ENCODE measurements at regions of chr6 and their contacts with region 1.

Region 1: DNA sequence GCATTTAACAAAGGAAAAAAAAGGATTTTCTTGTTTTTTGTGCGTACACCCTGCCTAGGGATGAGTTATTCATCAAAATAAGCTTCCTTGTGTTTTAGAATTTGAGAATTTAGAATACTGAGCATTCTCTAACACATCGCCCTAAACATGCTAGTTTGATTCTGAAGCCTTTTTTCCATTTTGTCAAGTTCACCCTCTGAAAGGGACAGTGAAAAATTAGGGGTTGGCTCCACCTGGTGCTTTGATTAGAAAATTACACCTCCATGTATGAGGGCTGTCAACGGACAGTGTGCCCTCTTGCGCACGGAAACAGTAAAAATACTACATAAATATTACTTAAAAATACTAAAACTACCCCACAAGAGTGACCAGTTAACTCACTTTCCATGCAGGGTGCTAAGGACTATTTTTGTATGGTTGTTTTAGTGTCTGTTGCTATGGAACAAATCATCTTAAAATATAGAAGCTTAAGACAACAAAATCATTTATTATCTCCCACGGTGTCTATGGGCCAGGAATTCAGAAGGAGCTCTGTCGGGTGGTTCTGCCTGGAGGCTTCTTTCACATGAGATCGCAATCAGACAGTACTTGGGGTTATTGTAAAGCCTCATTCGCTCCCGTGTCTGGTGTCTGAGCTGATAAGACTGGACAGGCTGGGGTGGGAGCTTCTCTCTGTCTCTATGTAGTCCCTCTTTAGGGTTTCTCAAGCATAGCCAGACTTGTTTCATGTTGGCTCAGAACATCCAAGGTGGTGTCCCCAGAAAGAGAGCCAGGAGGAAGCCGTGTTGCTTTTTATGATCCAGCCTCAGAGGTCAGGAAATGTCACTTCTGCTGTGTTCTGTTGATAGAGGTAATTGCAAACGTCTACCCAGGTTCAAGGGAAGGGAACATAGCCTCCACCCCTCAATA is 41.1 kb upstream of the TMEM170B start:
- DNase-seq: peak; percentile 48 to 87 (median 69)
- ATAC-seq: peak; percentile 99
- H3K4me3 ChIP-seq: no peak overlapping the region
- H3K4me3 Mint-ChIP-seq: no peak overlapping the region
- H3K27ac ChIP-seq: no peak overlapping the region
- H3K27ac Mint-ChIP-seq: no peak overlapping the region
- H3K4me1 ChIP-seq: no peaks in the 10 kb centered on the region
- H3K4me1 Mint-ChIP-seq: peaks cover 3% of the 10 kb centered on the region
- H3K27me3 ChIP-seq: no peaks in the 10 kb centered on the region
- H3K27me3 Mint-ChIP-seq: no peaks in the 10 kb centered on the region
- CTCF ChIP-seq: peak; percentile 98

Region 2: GRCh38 chr6:10621213-10621612 is 875.2 kb before region 1 on chr6:
- CTCF ChIA-PET with region 1: no interaction called
- POLR2A ChIA-PET with region 1: no interaction called
- intact Hi-C with region 1: no loop called
- DNase-seq: no peak
- ATAC-seq: no peak
- H3K4me3 ChIP-seq: no peak overlapping the region
- H3K4me3 Mint-ChIP-seq: no peak overlapping the region
- H3K27ac ChIP-seq: no peak overlapping the region
- H3K27ac Mint-ChIP-seq: no peak overlapping the region
- H3K4me1 ChIP-seq: no peaks in the 10 kb centered on the region
- H3K4me1 Mint-ChIP-seq: no peaks in the 10 kb centered on the region
- H3K27me3 ChIP-seq: no peaks in the 10 kb centered on the region
- H3K27me3 Mint-ChIP-seq: no peaks in the 10 kb centered on the region
- CTCF ChIP-seq: no peak

Region 3: DNA sequence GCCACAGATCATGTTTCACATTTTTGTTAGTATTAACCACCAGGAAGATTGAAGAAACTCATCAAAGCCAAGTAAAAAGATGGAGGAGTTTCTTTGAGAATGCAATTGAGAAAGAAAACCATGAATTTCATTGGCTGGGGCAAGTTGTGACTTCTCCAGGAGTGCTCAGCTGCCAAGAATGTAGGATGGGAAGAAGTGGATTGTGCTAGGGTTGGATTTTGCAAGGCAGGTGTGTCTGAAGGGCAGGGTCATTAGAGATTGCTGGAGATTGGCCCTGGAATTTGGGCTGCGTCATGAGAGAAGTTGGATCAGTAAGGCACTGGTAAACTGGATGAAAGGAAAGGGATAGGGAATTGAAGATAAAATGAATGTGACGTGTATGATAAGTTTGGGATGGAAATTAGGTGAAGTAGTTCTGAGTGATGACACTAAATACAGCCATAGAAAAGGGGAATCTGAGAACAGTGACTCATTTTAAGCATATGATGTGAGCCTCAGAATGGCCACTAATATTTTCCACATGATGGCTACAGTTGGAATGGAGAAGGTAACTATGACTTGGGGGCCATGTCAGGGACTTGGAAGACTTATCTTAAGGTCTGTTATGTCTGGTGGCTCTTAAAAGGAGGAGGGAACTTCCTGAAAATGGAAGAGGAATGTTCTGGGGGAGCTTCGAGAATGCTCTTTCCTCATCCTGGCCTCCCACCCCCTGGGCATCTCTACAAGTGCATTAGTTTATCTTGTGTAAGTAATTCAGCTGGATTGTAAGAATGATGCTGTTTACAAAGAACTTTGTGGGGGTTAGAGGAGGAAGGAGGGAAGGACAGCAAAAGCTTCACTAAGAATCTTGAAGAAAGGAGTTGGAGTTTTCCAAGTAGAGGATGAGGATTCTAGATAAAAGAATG is 357.1 kb before region 1 on chr6:
- CTCF ChIA-PET with region 1: interaction called, 101 read pairs
- POLR2A ChIA-PET with region 1: interaction called, 3 read pairs
- intact Hi-C with region 1: loop called (anchors 1 kb)
- DNase-seq: no peak
- ATAC-seq: no peak
- H3K4me3 ChIP-seq: no peak overlapping the region
- H3K4me3 Mint-ChIP-seq: no peak overlapping the region
- H3K27ac ChIP-seq: no peak overlapping the region
- H3K27ac Mint-ChIP-seq: no peak overlapping the region
- H3K4me1 ChIP-seq: no peaks in the 10 kb centered on the region
- H3K4me1 Mint-ChIP-seq: no peaks in the 10 kb centered on the region
- H3K27me3 ChIP-seq: no peaks in the 10 kb centered on the region
- H3K27me3 Mint-ChIP-seq: no peaks in the 10 kb centered on the region
- CTCF ChIP-seq: no peak

Region 4: DNA sequence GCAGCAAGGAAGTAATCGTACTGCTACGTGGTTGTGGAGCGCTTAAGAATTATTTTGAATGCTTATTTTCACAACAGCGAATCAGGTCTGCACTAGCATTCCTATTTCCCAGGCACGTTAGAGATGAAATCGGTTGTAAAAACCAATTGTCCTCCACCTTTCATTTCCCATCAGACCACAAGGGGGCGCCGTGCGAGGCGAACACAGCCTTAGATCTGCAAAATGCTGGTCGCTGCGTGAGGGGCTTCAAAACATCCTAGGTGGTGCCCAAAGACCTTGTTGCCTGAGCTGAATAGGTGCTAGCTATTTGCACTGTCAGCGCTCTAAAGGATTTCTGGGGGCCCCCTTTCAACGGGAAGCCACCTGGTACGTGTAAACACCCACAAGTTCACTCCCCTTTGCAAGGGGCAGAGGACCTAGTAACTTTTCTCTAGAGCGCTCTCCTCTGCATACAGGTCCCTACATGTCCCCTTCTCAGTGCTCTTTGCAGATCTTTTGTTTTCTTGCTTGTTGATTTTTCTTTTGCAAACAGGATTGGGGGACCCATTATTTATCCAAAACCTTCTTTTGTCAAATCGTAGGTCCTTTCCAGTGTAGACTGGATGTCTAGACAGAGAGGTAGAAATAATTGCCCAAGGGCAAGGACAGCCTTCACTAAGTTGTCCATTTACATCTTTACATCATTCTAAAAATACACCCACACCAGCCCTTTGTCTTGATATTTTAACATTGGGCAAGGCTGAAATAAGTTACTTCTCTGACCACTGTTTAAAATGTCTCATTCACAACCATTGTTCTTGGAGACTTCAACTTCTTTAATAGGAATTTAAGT is 323.7 kb before region 1 on chr6:
- CTCF ChIA-PET with region 1: interaction called, 257 read pairs
- POLR2A ChIA-PET with region 1: interaction called, 3 read pairs
- intact Hi-C with region 1: loop called (anchors 1 kb)
- DNase-seq: peak; percentile 58 to 90 (median 77)
- ATAC-seq: peak; percentile 79
- H3K4me3 ChIP-seq: peak overlapping the region in 1 of 2 experiments; percentile 23
- H3K4me3 Mint-ChIP-seq: peak overlapping the region; percentile 44
- H3K27ac ChIP-seq: no peak overlapping the region
- H3K27ac Mint-ChIP-seq: peak overlapping the region; percentile 62
- H3K4me1 ChIP-seq: peaks cover 9% of the 10 kb centered on the region
- H3K4me1 Mint-ChIP-seq: peaks cover 11% of the 10 kb centered on the region
- H3K27me3 ChIP-seq: no peaks in the 10 kb centered on the region
- H3K27me3 Mint-ChIP-seq: no peaks in the 10 kb centered on the region
- CTCF ChIP-seq: peak; percentile 86

Region 5: DNA sequence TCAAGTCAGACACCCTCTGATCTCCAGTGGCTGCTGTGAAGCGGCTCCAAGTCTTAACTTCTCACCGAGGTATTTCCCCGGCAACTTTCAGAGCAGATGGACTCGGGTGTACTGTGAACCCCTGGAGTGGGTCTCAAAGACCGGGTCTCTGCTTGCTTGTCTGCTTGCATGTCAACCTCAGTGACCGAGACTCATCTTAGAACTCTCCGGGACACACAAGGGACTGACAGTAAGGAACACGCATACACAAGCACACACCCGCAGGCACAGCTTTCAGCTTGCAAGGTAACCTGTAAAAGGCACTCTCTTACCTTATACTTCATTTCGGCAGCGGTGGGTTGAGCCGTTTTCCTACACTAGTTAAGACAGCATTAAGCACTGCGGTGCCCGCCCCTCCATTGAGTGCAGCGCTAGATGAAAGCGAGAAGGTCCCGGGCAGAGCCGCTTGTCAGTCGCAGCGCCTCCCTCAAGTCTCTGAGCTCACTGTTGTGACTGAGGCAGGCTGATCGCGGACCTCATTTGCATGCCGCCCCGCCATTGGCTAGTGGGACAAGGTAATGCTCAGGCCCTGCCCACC is 264.1 kb before region 1 on chr6 and contains the start of gene NEDD9:
- CTCF ChIA-PET with region 1: interaction called, 15 read pairs
- POLR2A ChIA-PET with region 1: no interaction called
- intact Hi-C with region 1: no loop called
- DNase-seq: peak; percentile 87 to 97 (median 91)
- ATAC-seq: peak; percentile 94
- H3K4me3 ChIP-seq: peak within 1 kb of the TSS; percentile 62 to 70
- H3K4me3 Mint-ChIP-seq: peak within 1 kb of the TSS; percentile 94
- H3K27ac ChIP-seq: peak within 1 kb of the TSS; percentile 76 to 96
- H3K27ac Mint-ChIP-seq: peak within 1 kb of the TSS; percentile 99
- H3K4me1 ChIP-seq: peaks cover 25% of the 10 kb centered on the region
- H3K4me1 Mint-ChIP-seq: peaks cover 61% of the 10 kb centered on the region
- H3K27me3 ChIP-seq: no peaks in the 10 kb centered on the region
- H3K27me3 Mint-ChIP-seq: no peaks in the 10 kb centered on the region
- CTCF ChIP-seq: no peak
- total RNA-seq, gene NEDD9: 41.2 to 44.2 TPM

Region 6: GRCh38 chr6:11270030-11271027 is 226.1 kb before region 1 on chr6:
- CTCF ChIA-PET with region 1: no interaction called
- POLR2A ChIA-PET with region 1: no interaction called
- intact Hi-C with region 1: no loop called
- DNase-seq: no peak
- ATAC-seq: no peak
- H3K4me3 ChIP-seq: no peak overlapping the region
- H3K4me3 Mint-ChIP-seq: no peak overlapping the region
- H3K27ac ChIP-seq: no peak overlapping the region
- H3K27ac Mint-ChIP-seq: no peak overlapping the region
- H3K4me1 ChIP-seq: peaks cover 5% of the 10 kb centered on the region
- H3K4me1 Mint-ChIP-seq: peaks cover 6% of the 10 kb centered on the region
- H3K27me3 ChIP-seq: no peaks in the 10 kb centered on the region
- H3K27me3 Mint-ChIP-seq: no peaks in the 10 kb centered on the region
- CTCF ChIP-seq: no peak

Region 7: DNA sequence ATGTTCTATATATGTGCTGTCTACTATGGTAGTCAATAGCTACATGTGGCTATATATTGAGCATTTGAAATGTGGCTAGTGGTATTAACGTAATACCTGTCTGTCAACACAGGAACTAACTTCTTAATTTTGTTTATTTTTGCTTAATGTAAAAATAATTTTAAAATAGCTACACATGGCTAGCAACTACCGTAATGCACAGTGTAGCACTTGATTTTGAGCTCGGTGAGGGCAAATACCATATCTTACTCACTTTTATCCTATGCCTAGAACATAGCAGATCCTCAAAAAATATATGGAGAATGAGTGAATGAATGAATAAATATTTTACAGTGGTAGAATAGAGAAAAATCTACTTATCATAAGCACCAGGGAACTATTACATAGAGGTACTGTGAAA is 13.1 kb after region 1 on chr6:
- CTCF ChIA-PET with region 1: interaction called, 10 read pairs
- POLR2A ChIA-PET with region 1: no interaction called
- intact Hi-C with region 1: no loop called
- DNase-seq: no peak
- ATAC-seq: no peak
- H3K4me3 ChIP-seq: no peak overlapping the region
- H3K4me3 Mint-ChIP-seq: no peak overlapping the region
- H3K27ac ChIP-seq: no peak overlapping the region
- H3K27ac Mint-ChIP-seq: no peak overlapping the region
- H3K4me1 ChIP-seq: no peaks in the 10 kb centered on the region
- H3K4me1 Mint-ChIP-seq: no peaks in the 10 kb centered on the region
- H3K27me3 ChIP-seq: no peaks in the 10 kb centered on the region
- H3K27me3 Mint-ChIP-seq: peaks cover 15% of the 10 kb centered on the region
- CTCF ChIP-seq: no peak

Region 8: GRCh38 chr6:11711003-11711983 is 214.9 kb after region 1 on chr6:
- CTCF ChIA-PET with region 1: no interaction called
- POLR2A ChIA-PET with region 1: no interaction called
- intact Hi-C with region 1: no loop called
- DNase-seq: peak in 8 of 9 experiments; percentile 10 to 70 (median 30)
- ATAC-seq: peak; percentile 59
- H3K4me3 ChIP-seq: no peak overlapping the region
- H3K4me3 Mint-ChIP-seq: peak overlapping the region; percentile 33
- H3K27ac ChIP-seq: peak overlapping the region; percentile 28 to 46
- H3K27ac Mint-ChIP-seq: peak overlapping the region; percentile 96
- H3K4me1 ChIP-seq: peaks cover 72% of the 10 kb centered on the region
- H3K4me1 Mint-ChIP-seq: peaks cover 74% of the 10 kb centered on the region
- H3K27me3 ChIP-seq: no peaks in the 10 kb centered on the region
- H3K27me3 Mint-ChIP-seq: no peaks in the 10 kb centered on the region
- CTCF ChIP-seq: no peak

Region 9: DNA sequence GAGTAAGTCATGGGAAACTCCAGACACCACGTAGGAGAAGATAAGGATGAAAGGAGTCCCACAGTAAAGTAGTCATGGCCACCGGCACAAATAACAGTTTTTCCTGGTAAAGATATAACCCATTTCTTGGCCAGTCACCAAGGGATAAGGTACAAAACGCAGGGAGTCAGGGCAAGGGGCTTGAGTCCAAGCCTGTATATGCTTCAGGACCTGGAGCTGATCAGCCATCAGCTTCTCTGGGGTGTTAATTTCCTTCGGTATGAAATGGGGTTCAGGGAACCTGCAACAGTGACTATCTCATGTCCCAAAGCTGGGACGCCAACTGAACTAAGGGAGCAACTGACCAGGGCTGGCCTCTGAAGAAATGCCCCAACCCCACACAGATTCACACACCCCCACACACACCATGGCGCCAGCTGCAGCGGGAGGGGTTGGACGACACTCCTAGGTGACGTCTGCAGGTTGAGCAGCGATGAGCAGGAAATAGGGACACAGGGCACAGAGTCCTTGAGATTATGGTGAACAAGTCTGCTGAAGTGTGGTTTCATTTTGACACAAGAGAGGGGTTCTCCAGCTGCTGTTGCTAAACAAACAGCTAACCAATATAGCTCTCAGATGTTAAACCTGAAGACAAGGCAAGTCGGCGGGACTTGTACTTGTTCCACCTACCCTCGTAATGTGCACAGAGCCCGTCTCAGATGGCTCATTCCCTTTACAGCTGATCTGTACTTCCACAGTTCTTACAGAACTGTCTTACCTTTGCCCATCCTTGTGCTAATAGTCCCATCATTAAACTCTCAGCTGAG is 289.6 kb after region 1 on chr6:
- CTCF ChIA-PET with region 1: no interaction called
- POLR2A ChIA-PET with region 1: no interaction called
- intact Hi-C with region 1: no loop called
- DNase-seq: peak in 3 of 9 experiments; percentile 23 to 43 (median 26)
- ATAC-seq: peak; percentile 62
- H3K4me3 ChIP-seq: peak overlapping the region in 1 of 2 experiments; percentile 20
- H3K4me3 Mint-ChIP-seq: peak overlapping the region; percentile 70
- H3K27ac ChIP-seq: no peak overlapping the region
- H3K27ac Mint-ChIP-seq: no peak overlapping the region
- H3K4me1 ChIP-seq: no peaks in the 10 kb centered on the region
- H3K4me1 Mint-ChIP-seq: peaks cover 7% of the 10 kb centered on the region
- H3K27me3 ChIP-seq: no peaks in the 10 kb centered on the region
- H3K27me3 Mint-ChIP-seq: peaks cover 2% of the 10 kb centered on the region
- CTCF ChIP-seq: no peak

Measured in CD8-positive, alpha-beta T cell (primary cell).